Activated B cell treated with CpG ODN at 0.5 μM for 24 hours (primary cell): ENCODE measurements at regions of chr16 and their contacts with region 1.

Region 1: GRCh38 chr16:46689365-46690280 is at the start of gene ORC6:
- DNase-seq: peak; percentile 91
- ATAC-seq: peak; percentile 75
- H3K4me3 Mint-ChIP-seq: no peak within 1 kb of the TSS
- H3K27ac Mint-ChIP-seq: no peak within 1 kb of the TSS
- H3K4me1 Mint-ChIP-seq: peaks cover 32% of the 10 kb centered on the region
- H3K27me3 Mint-ChIP-seq: no peaks in the 10 kb centered on the region
- CTCF ChIP-seq: no peak
- total RNA-seq, gene ORC6: 8.0 and 13.2 TPM in 2 replicates

Region 2: DNA sequence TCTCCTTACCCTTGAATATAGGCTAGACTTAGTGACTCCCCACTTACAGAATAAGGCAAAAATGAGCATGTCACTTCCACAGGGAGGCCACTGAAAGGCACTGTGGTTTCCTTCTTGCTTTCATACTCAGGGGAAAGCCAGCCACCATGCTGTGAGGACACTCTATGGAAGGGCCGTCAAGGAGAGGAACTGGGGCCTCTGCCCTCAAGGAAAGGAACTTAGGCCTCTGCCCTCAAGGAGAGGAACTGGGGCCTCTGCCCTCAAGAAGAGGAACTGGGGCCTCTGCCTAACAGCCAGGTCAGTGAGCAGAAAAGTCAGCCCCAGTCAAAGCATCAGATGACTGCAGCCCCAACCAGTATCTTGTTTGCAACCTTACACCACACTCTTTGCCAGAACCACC is 30.7 kb before region 1 on chr16:
- CTCF ChIA-PET with region 1: no interaction called
- POLR2A ChIA-PET with region 1: no interaction called
- intact Hi-C with region 1: loop called (anchors 2 kb)
- DNase-seq: peak; percentile 26
- ATAC-seq: peak; percentile 95
- H3K4me3 Mint-ChIP-seq: peak overlapping the region; percentile 20
- H3K27ac Mint-ChIP-seq: peak overlapping the region; percentile 80
- H3K4me1 Mint-ChIP-seq: peaks cover 21% of the 10 kb centered on the region
- H3K27me3 Mint-ChIP-seq: no peaks in the 10 kb centered on the region
- CTCF ChIP-seq: no peak

Region 3: GRCh38 chr16:46709469-46710005 is 19.9 kb after region 1 on chr16:
- CTCF ChIA-PET with region 1: no interaction called
- POLR2A ChIA-PET with region 1: no interaction called
- intact Hi-C with region 1: no loop called
- DNase-seq: no peak
- ATAC-seq: no peak
- H3K4me3 Mint-ChIP-seq: no peak overlapping the region
- H3K27ac Mint-ChIP-seq: no peak overlapping the region
- H3K4me1 Mint-ChIP-seq: peaks cover 16% of the 10 kb centered on the region
- H3K27me3 Mint-ChIP-seq: no peaks in the 10 kb centered on the region
- CTCF ChIP-seq: no peak

Region 4: GRCh38 chr16:46789499-46790414 is 100.1 kb after region 1 on chr16:
- CTCF ChIA-PET with region 1: no interaction called
- POLR2A ChIA-PET with region 1: interaction called, 20 read pairs
- intact Hi-C with region 1: loop called (anchors 1 kb)
- DNase-seq: peak; percentile 77
- ATAC-seq: peak; percentile 93
- H3K4me3 Mint-ChIP-seq: peak overlapping the region; percentile 84
- H3K27ac Mint-ChIP-seq: peak overlapping the region; percentile 86
- H3K4me1 Mint-ChIP-seq: peaks cover 57% of the 10 kb centered on the region
- H3K27me3 Mint-ChIP-seq: no peaks in the 10 kb centered on the region
- CTCF ChIP-seq: no peak

Region 5: GRCh38 chr16:46883690-46884512 is 194.3 kb after region 1 on chr16 and contains the start of gene GPT2:
- CTCF ChIA-PET with region 1: no interaction called
- POLR2A ChIA-PET with region 1: no interaction called
- intact Hi-C with region 1: loop called (anchors 1 kb)
- DNase-seq: peak; percentile 85
- ATAC-seq: peak; percentile 95
- H3K4me3 Mint-ChIP-seq: peak within 1 kb of the TSS; percentile 89
- H3K27ac Mint-ChIP-seq: peak within 1 kb of the TSS; percentile 85
- H3K4me1 Mint-ChIP-seq: peaks cover 11% of the 10 kb centered on the region
- H3K27me3 Mint-ChIP-seq: peaks cover 2% of the 10 kb centered on the region
- CTCF ChIP-seq: no peak
- total RNA-seq, gene GPT2: 11.7 and 17.4 TPM in 2 replicates

Region 6: DNA sequence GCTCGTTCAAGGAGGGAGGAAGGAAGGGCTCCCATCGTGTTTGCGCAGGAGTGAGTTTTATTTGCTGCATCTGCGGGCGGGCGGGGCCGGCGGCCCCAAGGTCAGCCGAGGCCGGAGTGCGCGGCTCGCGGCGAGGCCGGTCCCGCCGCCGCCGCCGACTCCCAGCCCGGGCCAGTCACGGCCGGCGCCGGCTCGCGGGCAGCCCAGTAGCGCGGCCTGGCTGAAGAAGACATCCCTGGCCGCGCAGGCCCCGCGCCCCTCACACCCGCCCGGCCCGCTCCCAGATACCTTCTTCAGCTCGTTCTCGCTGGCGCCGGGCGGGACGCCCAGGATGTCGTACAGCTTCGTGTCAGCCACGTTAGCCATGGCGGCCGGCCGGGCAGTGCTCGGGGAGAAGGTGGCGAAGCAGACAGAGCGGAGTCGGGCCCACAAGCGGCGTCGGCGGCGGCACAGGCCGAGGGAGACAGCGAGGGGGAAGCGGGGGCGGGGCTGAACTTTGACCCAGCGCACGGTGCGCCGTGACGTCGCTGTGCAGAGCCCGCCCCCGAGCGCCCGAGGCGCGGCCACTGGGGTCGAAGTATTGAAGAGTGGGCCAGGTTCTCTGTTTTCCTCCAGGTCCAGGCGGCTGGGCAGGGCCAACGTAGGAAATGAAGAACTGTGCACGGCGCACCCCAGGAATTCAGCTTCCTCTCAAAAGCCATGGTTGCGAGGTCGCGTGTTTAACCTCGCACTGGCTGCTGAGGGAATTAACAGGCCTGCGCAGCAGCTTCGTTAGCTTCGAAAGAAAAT is 283.8 kb after region 1 on chr16 and contains the start of gene DNAJA2:
- CTCF ChIA-PET with region 1: no interaction called
- POLR2A ChIA-PET with region 1: interaction called, 6 read pairs
- intact Hi-C with region 1: loop called (anchors 1 kb)
- DNase-seq: peak; percentile 94
- ATAC-seq: peak; percentile 93
- H3K4me3 Mint-ChIP-seq: peak within 1 kb of the TSS; percentile 95
- H3K27ac Mint-ChIP-seq: peak within 1 kb of the TSS; percentile 98
- H3K4me1 Mint-ChIP-seq: peaks cover 44% of the 10 kb centered on the region
- H3K27me3 Mint-ChIP-seq: no peaks in the 10 kb centered on the region
- CTCF ChIP-seq: no peak
- total RNA-seq, gene DNAJA2: 54.4 and 57.1 TPM in 2 replicates

Region 7: GRCh38 chr16:47008174-47008573 is 318.6 kb after region 1 on chr16:
- CTCF ChIA-PET with region 1: no interaction called
- POLR2A ChIA-PET with region 1: no interaction called
- intact Hi-C with region 1: no loop called
- DNase-seq: no peak
- ATAC-seq: no peak
- H3K4me3 Mint-ChIP-seq: no peak overlapping the region
- H3K27ac Mint-ChIP-seq: no peak overlapping the region
- H3K4me1 Mint-ChIP-seq: no peaks in the 10 kb centered on the region
- H3K27me3 Mint-ChIP-seq: no peaks in the 10 kb centered on the region
- CTCF ChIP-seq: no peak